Panc1 (cell line): ENCODE measurements at regions of chr2 and their contacts with region 1.

Region 1: DNA sequence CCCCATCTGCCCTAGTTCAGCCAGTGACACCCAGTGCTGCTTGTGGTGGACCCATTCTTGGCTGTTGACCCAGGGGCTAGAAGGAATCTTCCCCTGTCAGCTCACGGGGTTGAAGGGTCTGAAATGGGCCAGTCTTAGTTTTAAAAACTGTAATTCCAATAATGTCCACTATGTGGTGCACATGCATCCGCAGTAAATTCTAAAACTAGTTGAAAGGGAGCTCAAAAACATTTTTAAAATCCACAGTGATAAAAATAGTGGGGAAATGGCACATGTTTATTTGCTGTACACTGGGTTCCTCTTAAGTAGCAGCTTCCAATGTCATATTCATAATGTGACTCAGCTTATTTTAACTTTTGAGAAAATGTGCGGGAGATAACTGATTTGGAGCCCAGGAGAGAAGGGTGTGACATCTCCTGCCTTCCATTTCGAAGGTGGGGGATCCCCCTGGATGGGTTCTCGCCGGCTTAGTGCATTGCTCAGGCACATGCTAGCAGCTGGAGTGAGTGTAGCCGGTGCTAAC is 32.8 kb downstream of the GRHL1 start:
- DNase-seq: peak; percentile 20
- ATAC-seq: peak; percentile 76
- H3K4me3 ChIP-seq: no peak overlapping the region
- H3K27ac ChIP-seq: no peak overlapping the region
- H3K4me1 ChIP-seq: no peaks in the 10 kb centered on the region
- H3K27me3 ChIP-seq: no peaks in the 10 kb centered on the region
- CTCF ChIP-seq: peak; percentile 87

Region 2: DNA sequence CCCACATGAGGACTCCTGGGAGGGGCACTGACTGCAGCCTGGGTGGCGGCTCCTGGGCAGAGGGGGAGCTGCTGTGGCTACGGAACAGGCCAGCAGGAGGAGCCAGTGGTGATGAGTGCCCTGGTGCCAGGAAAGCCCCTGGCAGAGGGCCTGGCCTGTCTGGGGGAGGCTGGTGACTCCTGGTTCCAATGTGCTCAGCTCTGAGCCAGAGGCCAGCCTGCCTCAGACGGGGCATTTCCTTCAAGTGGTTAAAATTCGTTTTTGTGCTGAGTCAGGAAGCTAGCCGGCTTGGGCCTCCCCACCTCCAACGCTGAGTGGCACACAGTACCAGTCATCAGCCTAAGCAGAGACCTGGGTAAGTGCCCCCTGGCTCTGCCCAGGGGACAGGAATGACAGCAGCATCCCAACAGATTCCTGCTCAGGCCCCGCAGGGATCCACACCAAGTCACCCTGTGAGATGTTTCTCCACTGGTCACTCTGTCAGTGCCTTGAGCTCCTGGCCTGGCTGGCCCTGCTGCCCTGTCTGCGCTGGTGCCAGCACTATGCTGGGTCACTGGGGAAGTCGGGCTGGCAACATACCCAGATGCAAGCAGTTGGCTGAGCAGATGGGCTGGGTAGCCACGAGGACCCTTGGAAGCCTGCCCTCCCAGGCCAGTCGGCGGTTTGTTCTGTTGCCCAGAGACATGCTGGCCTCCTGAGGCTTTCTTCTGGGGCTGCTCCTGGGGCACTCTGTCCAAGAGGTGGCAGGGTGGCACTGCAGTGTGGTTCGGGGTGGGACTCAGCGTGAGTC is 52.0 kb after region 1 on chr2:
- CTCF ChIA-PET with region 1: interaction called, 10 read pairs
- POLR2A ChIA-PET with region 1: no interaction called
- in situ Hi-C with region 1: no loop called
- intact Hi-C with region 1: no loop called
- DNase-seq: peak; percentile 17
- ATAC-seq: peak; percentile 89
- H3K4me3 ChIP-seq: no peak overlapping the region
- H3K27ac ChIP-seq: peak overlapping the region; percentile 85
- H3K4me1 ChIP-seq: peaks cover 12% of the 10 kb centered on the region
- H3K27me3 ChIP-seq: no peaks in the 10 kb centered on the region
- CTCF ChIP-seq: peak; percentile 84

Region 3: GRCh38 chr2:10266133-10266620 is 281.9 kb after region 1 on chr2:
- CTCF ChIA-PET with region 1: interaction called, 11 read pairs
- POLR2A ChIA-PET with region 1: no interaction called
- in situ Hi-C with region 1: no loop called
- intact Hi-C with region 1: no loop called
- DNase-seq: no peak
- ATAC-seq: no peak
- H3K4me3 ChIP-seq: no peak overlapping the region
- H3K27ac ChIP-seq: no peak overlapping the region
- H3K4me1 ChIP-seq: peaks cover 13% of the 10 kb centered on the region
- H3K27me3 ChIP-seq: no peaks in the 10 kb centered on the region
- CTCF ChIP-seq: no peak